ENCODE measurements at regions of chr10 and their contacts with region 1.

Region 1: DNA sequence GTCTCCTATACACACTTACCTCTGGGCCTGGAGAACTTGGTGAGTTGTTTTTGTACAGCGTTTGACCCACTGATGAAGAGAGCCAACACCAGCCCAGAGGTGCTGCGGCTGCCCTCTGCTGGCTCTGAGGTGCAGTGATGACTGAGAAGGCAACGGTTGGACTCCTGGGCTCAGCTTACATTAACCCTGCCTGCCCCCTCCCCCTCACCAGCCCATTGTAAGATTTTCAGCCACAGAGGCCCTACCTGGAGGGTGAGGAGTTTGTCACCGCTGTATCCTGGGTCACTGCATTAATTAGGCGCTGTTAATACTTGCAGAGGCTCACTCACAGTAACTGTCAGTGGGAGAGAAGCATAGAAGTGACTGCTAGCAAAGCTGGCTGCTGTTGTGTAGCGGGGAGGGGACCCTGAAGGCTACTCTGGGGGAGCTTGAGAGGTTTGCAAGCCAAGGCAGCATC is 19.0 kb upstream of the ANKRD2 start:
- DNase-seq: no peak
- H3K4me3 ChIP-seq: no peak overlapping the region
- H3K27me3 ChIP-seq: no peaks in the 10 kb centered on the region
- CTCF ChIP-seq: peak; percentile 96

Region 2: DNA sequence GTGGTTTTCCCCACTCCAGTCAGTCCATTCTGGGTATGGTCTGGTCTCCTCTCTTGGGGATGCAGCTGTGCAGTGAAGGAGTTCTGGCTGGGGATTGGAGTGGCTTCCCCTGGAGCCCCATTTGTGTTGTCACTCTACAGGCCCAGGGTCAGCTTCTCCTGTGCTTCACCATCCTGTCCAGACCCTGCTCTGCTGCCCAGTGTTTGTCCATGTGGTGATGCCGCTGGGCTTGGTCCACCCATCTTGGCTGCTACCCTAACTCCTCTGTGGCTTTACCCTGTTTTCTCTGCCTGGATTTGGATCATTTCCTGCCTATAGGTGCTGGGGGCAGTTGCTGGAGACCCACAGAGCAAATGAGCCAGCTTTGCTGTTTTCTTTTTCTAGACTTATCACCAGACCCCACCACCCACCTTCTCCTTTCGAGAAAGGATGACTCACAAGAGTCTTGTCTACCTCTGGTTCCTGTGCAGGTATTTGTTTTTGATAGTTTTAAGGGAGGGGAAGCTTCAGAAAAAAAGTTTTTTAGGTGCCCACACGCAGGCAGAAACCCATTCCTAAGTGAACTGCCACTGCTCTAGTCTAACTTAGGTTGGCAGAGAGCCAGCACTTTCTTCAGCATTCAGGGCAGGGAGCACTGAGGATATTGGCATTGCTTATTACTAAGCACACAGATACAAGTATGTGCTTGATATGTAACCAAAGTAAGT is 99.1 kb before region 1 on chr10:
- CTCF ChIA-PET with region 1: interaction called, 104 read pairs
- POLR2A ChIA-PET with region 1: no interaction called
- DNase-seq: no peak
- H3K4me3 ChIP-seq: no peak overlapping the region
- H3K27me3 ChIP-seq: no peaks in the 10 kb centered on the region
- CTCF ChIP-seq: no peak

Region 3: DNA sequence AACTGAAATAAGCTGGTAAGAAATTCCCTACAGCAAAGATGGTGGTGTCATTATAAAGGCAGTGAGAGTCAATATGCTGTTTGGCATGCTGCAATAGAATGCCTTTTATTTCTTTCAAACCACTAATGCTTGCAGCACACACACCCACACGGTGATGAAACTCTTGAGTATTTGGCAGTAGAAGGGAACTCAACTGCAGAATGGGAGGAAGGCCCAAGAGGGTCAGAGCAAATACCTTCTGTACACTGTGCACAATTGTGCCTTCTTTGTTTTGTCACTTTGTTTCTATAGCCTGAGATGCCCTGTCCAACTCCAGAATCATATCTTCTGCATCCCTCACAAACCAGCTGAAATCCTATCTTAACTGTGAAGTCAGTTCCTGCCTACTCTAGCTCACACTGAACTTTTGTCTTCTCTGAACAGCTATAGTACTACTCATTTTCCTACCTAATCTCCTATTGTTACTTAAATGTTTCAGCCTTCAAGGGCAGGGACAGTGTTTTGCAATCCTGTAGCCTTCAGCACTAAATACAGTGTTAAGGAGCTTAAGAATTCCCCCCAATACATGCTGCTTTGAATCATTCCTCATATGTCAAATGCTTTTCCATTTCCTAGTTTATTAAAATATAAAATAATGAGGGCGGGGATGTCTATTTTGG is 77.5 kb before region 1 on chr10:
- CTCF ChIA-PET with region 1: interaction called, 10 read pairs
- POLR2A ChIA-PET with region 1: no interaction called
- DNase-seq: peak; percentile 55
- H3K4me3 ChIP-seq: no peak overlapping the region
- H3K27me3 ChIP-seq: no peaks in the 10 kb centered on the region
- CTCF ChIP-seq: no peak

Region 4: DNA sequence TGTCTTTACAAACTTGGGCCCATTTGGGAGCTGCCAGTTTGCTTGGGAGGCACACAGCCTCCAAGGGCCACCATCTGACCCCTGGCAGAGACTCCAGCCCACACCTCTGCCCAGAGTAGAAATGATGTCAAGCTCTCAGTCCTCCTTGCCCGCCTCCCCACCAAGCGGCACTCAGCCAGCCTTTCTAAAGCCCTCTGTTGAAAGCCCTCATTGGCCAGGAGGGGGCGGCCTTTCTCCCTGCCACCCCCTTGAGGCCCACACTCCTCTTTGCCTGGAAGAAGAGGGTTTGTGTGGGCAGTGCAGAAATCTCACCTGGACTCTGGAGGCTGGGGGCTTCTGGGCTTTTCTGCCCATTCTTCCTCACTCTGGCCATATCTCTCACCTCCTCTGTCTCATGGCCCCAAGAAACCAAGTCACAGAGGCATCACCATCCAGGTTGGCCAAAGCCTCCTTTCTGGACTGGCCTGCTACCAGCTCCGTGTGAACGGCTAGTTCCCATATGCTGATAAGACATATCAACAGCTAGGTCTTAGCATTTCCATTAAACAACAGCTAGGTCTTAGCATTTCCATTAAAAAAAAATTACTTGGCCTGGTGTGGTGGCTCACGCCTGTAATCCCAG is 18.7 kb before region 1 on chr10:
- CTCF ChIA-PET with region 1: interaction called, 66 read pairs
- POLR2A ChIA-PET with region 1: no interaction called
- DNase-seq: no peak
- H3K4me3 ChIP-seq: no peak overlapping the region
- H3K27me3 ChIP-seq: no peaks in the 10 kb centered on the region
- CTCF ChIP-seq: peak; percentile 66

Region 5: DNA sequence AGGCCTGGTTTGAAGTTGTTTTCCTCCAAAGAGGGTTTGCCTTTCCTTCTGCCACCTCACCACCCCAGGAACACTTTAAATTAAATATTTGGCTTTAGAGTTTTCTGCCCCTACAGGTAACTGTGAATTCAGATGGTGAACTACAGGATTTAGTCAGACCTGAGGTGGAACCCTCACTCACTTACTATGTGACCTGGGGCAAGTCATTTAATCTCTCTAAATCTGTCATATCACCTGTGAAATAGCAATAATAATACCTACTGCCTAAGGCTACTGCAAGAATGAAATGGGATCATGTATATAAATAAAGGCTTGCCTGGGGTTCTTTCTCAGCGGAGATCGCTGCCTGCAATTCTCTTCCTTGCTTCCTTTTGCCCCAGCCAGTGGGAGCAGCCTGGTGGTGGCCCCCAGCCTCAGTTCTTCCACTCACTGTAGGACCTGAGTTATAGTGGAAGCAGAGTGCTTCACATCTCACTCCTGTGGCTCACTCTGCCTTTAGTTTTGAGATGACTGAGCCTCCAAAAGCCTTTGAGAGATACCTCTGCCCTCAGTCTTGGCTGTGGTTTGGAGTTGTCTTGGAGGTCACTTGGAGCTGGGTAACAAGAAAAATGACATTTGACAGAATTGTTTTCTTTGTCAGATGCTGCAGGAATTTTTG is 12.9 kb after region 1 on chr10:
- CTCF ChIA-PET with region 1: interaction called, 22 read pairs
- POLR2A ChIA-PET with region 1: no interaction called
- DNase-seq: no peak
- H3K4me3 ChIP-seq: no peak overlapping the region
- H3K27me3 ChIP-seq: no peaks in the 10 kb centered on the region
- CTCF ChIP-seq: no peak

Region 6: GRCh38 chr10:97792141-97792721 is 238.6 kb after region 1 on chr10:
- CTCF ChIA-PET with region 1: no interaction called
- POLR2A ChIA-PET with region 1: no interaction called
- DNase-seq: no peak
- H3K4me3 ChIP-seq: no peak overlapping the region
- H3K27me3 ChIP-seq: peaks cover 7% of the 10 kb centered on the region
- CTCF ChIP-seq: peak; percentile 97